Lower leg skin (tissue), 4 donors: ENCODE measurements at regions of chr14 and their contacts with region 1.

Region 1: DNA sequence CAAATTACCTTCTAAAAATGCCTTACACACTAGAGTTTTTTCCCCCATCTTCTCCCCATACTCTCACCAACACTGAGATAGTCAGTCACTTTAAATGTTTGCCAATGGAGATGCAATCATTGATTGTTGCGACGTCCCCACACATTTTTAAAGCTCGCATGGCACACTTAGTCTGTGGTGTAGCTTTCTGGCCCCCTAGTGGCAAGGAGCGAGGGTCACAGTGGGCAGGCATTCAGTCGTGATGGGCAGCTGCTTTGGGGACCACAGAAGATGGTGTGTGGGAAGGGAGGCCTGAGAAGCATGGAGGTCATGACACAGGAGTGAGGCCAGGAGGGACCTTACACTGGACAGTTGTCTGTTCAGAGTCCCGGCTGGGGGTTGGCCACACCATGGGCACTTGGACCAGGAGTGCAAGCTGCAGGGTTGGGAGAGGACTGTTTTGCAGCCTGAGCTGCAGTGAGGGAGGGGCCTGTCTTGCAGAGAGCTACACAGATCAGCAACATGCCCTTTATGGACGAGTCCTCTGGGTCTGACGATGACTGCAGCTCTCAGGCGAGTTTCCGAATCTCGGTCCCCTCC is 28.7 kb downstream of the PIGH start:
- DNase-seq: peak in 1 of 2 donors; percentile 64
- H3K4me3 ChIP-seq: no peak overlapping the region
- CTCF ChIP-seq: no peak
- POLR2A ChIP-seq: no peak

Region 2: GRCh38 chr14:67426983-67427606 is 144.3 kb before region 1 on chr14:
- intact Hi-C with region 1: loop called (anchors 5 kb)
- DNase-seq: peak; percentile 51 to 92
- H3K4me3 ChIP-seq: no peak overlapping the region
- CTCF ChIP-seq: peak in 1 of 3 donors; percentile 65
- POLR2A ChIP-seq: no peak

Region 3: DNA sequence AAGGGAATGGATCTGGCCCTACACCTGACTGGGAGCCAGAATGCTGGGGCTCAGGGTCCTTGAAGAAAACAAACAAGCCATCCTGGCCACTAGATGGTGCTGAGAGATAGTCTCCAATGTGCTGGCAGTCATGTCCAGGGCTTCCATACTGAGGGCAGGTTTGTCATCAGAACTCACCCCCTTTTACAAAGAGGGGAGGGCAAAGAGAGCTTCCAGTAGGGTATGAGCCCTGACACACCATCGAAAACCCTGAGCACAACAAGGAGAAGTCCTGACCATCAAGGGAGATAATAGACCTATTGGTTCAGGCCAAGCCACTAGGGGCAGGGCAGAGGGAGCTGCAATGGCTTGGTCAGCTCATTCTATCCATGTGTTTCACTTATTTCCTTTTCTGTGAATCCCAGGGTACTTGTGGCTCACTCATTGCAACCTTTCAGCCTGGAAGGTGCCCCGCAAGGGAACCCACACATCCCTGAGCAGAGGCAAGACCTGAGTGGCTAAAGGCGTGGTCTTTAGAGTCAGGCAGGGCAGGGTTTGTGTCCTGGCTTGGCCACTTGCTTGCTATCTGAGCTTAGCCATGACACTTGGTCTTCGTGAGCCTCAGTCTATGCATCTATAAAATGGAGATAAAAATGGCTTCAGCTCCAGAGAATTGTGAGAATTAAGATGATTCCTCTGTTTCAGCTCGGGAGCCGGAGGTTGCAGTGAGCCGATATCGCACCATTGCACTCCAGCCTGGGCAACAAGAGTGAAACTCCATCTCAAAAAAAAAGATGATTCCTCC is 44.5 kb before region 1 on chr14:
- intact Hi-C with region 1: loop called (anchors 5 kb)
- DNase-seq: peak in 1 of 2 donors; percentile 79
- H3K4me3 ChIP-seq: no peak overlapping the region
- CTCF ChIP-seq: no peak
- POLR2A ChIP-seq: no peak

Region 4: DNA sequence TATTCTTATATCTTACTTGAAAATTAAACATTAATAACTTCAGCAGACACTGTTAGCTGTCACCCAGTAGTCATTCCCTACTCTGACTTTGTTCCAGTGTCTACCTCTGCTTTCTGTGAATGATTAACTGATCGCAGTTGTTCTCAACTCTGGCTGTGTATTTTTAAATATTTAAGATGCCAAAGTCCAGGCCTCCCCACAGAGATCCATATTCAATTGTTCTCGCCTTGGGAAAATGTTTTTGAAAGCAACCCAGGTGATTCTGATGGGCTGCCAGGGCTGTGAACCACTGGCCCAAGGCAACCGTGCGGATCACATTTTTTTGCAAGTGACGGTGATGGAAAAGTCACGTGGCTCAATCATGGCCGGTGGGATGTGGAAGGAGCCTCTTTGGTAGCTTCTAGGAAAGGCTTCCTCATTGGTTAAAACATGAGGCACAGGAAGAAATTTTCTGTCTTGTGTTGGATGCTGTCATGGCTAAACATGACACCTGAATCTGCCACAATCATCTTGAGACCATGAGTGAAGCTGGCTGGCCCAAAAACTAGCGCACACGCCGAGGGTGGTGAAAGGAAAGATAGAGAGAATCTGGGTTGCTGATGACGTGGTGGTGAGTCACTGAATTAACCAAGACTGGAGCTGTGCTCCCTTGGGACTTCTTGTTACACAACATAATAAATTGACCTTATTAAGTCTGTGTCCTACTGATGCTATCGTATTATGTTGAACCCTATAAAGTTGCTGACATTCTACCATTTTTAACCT is 167.6 kb after region 1 on chr14:
- intact Hi-C with region 1: no loop called
- DNase-seq: peak; percentile 87 to 91
- H3K4me3 ChIP-seq: no peak overlapping the region
- CTCF ChIP-seq: no peak
- POLR2A ChIP-seq: no peak